Activated CD8-positive, alpha-beta memory T cell treated with anti-CD3 and anti-CD28 coated beads, Interleukin-2, amount 10 ng/mL, durations not matched to agents 7 days and 5 days (primary cell): ENCODE measurements at regions of chr6 and their contacts with region 1.

Region 1: GRCh38 chr6:36765594-36766398 is 68.2 kb downstream of the RAB44 start:
- DNase-seq: peak; percentile 90
- ATAC-seq: peak; percentile 93
- H3K4me3 Mint-ChIP-seq: no peak overlapping the region
- H3K27ac Mint-ChIP-seq: no peak overlapping the region
- H3K4me1 Mint-ChIP-seq: peaks cover 37% of the 10 kb centered on the region
- H3K27me3 Mint-ChIP-seq: no peaks in the 10 kb centered on the region

Region 2: GRCh38 chr6:36636283-36636682 is 129.5 kb before region 1 on chr6:
- CTCF ChIA-PET with region 1: no interaction called
- DNase-seq: no peak
- ATAC-seq: no peak
- H3K4me3 Mint-ChIP-seq: no peak overlapping the region
- H3K27ac Mint-ChIP-seq: no peak overlapping the region
- H3K4me1 Mint-ChIP-seq: no peaks in the 10 kb centered on the region
- H3K27me3 Mint-ChIP-seq: no peaks in the 10 kb centered on the region

Region 3: DNA sequence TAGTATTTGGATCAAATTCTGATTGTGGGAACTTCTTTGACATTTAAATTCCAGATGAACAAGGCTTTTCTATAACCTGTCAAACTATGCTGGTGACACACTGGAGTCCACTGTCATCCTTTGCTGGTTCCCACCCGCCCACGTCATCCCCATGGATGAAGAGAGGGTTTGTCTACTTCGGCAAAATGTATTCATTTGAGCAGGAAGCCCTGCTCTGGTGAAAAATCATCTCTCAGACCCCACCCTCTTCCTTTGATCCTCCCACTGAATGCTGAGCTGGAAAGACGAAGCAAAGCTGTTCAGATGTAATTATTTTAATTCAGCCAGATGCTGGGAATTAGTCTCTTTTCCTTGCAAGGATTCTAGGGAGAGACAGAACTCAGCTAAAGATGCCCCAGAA is 23.0 kb after region 1 on chr6:
- CTCF ChIA-PET with region 1: interaction called, 604 read pairs
- DNase-seq: no peak
- ATAC-seq: no peak
- H3K4me3 Mint-ChIP-seq: no peak overlapping the region
- H3K27ac Mint-ChIP-seq: no peak overlapping the region
- H3K4me1 Mint-ChIP-seq: no peaks in the 10 kb centered on the region
- H3K27me3 Mint-ChIP-seq: peaks cover 50% of the 10 kb centered on the region

Region 4: GRCh38 chr6:36874443-36875249 is 108.8 kb after region 1 on chr6 and contains the start of gene PPIL1:
- CTCF ChIA-PET with region 1: interaction called, 37 read pairs
- DNase-seq: peak; percentile 89
- ATAC-seq: peak; percentile 90
- H3K4me3 Mint-ChIP-seq: peak within 1 kb of the TSS; percentile 99
- H3K27ac Mint-ChIP-seq: peak within 1 kb of the TSS; percentile 100
- H3K4me1 Mint-ChIP-seq: peaks cover 53% of the 10 kb centered on the region
- H3K27me3 Mint-ChIP-seq: peaks cover 2% of the 10 kb centered on the region
- total RNA-seq, gene PPIL1: 30.8 to 39.9 TPM